Prostate gland (tissue), 2 donors: ENCODE measurements at regions of chr4 and their contacts with region 1.

Region 1: DNA sequence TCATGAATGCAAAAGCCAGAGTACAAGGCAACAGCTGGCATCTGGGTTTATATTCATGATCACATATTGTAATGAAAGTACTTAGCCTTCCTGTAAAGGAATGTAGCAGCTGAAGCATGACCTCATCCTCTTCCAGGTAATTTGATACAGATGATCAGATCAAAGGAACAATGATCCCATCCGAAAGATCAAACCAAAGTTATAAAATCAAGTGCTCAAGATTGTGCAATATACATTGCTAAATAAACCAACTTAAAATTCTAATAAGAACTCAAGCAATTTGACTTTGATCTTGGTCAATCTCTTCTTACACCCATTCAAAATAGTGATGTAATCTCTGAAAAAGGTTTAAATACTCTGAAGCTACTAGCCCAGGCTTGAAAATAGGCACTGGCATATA is 113.1 kb upstream of the INPP4B start:
- DNase-seq: no peak
- H3K4me3 ChIP-seq: no peak overlapping the region
- H3K27ac ChIP-seq: no peak overlapping the region
- H3K4me1 ChIP-seq: no peaks in the 10 kb centered on the region
- H3K27me3 ChIP-seq: no peaks in the 10 kb centered on the region
- CTCF ChIP-seq: no peak
- POLR2A ChIP-seq: no peak

Region 2: DNA sequence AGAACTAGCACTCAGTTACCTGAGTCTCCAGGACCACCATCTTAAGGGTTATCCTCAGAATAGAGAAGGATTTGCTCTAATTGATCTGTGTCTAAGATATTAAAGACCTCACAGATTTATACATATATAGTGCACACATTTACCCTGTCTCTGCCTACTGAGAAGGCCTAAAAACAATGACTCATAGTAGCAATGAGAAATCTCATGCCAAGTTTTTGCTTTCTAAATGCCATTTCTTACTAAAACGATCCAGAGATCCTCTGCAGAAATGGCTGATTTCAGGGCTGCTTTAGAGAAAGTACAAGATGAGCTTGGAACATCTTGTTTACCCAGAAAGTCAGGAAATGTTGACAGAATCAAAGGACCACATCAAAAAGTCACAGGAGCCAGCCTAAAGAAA is 34.0 kb before region 1 on chr4:
- intact Hi-C with region 1: loop called (anchors 2 kb)
- DNase-seq: no peak
- H3K4me3 ChIP-seq: no peak overlapping the region
- H3K27ac ChIP-seq: no peak overlapping the region
- H3K4me1 ChIP-seq: no peaks in the 10 kb centered on the region
- H3K27me3 ChIP-seq: no peaks in the 10 kb centered on the region
- CTCF ChIP-seq: no peak
- POLR2A ChIP-seq: no peak

Region 3: GRCh38 chr4:142944562-142944961 is 14.6 kb before region 1 on chr4:
- intact Hi-C with region 1: no loop called
- DNase-seq: no peak
- H3K4me3 ChIP-seq: no peak overlapping the region
- H3K27ac ChIP-seq: no peak overlapping the region
- H3K4me1 ChIP-seq: no peaks in the 10 kb centered on the region
- H3K27me3 ChIP-seq: no peaks in the 10 kb centered on the region
- CTCF ChIP-seq: no peak
- POLR2A ChIP-seq: no peak